GM18951 (cell line): ENCODE measurements at regions of chr2 and their contacts with region 1.

Region 1: GRCh38 chr2:137838255-137839092 is 125.8 kb upstream of the HNMT start:
- POLR2A ChIP-seq: no peak

Region 2: GRCh38 chr2:136423516-136423996 is 1414.9 kb before region 1 on chr2:
- in situ Hi-C with region 1: loop called (anchors 25 kb)
- POLR2A ChIP-seq: no peak

Region 3: DNA sequence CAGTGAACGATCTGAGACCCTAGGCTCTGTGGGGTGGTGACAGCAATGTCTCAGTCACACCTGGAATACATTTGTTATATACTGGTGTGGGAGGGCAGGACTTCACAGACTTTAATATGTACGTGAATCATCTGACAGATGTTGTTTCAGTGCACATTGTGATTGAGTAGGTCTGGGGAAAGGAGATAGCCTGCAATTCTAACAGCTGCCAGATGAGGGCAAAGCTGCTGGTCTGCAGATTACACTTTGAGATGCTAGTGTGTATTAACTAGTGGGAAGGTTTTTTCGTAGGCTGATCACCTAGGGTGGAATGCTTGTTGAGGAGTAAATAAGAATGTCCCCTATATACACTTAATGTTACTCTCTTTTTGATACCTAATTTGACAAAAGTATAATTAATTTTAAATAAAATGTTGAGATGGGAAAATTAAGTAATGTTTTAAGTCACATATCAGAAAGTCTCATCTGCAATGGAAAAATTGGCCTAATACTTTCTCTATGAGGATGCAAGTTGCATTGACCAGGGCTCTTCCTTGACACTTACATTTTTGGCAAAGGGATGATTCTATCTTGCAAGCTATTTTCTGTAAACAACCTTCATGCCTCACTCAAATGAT is 371.1 kb before region 1 on chr2:
- in situ Hi-C with region 1: loop called (anchors 25 kb)
- POLR2A ChIP-seq: no peak